H1 (cell line): ENCODE measurements at regions of chr14 and their contacts with region 1.

Region 1: GRCh38 chr14:23141671-23142451 is 22.8 kb upstream of the CEBPE start:
- DNase-seq: no peak
- H3K4me3 ChIP-seq: no peak overlapping the region
- H3K27ac ChIP-seq: no peak overlapping the region
- H3K4me1 ChIP-seq: no peaks in the 10 kb centered on the region
- H3K27me3 ChIP-seq: no peaks in the 10 kb centered on the region
- CTCF ChIP-seq: no peak
- EP300 ChIP-seq: no peak
- POLR2A ChIP-seq: no peak
- RAD21 ChIP-seq: no peak

Region 2: DNA sequence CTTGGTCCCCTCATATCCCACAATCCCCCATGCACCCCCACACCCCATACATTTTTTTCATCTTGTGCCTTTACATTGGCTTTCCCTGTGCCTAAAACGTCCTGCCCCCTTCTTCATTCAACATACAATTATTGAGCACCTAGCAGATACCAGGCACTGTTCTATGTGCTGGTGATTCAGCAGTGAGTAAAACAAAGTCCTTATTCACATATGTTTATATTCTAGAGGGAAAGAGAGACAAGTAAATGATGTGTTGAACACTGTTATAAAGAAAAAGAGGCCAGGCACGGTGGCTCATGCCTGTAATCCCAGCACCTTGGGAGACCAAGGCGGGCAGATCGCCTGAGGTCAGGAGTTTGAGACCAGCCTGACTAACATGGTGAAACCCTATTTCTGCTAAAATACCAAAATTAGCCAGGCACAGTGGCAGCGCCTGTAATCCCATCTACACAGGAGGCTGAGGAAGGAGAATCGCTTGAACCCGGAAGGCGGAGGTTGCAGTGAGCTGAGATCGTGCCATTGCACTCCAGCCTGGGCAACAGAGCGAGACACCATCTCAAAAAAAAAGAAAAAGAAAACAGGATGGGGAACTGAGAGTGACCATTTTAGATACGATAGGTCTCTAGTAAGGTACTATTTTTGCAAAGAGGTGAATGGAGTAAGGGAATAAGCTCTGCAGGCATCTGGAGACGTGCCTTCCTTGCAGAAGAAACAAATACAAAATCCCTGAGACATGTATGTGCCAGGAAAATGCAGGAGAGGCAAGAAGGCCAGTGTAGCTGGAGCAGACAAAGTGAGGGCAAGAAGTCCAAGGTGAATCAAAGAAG is 338.8 kb before region 1 on chr14:
- CTCF ChIA-PET with region 1: no interaction called
- POLR2A ChIA-PET with region 1: no interaction called
- DNase-seq: no peak
- H3K4me3 ChIP-seq: no peak overlapping the region
- H3K27ac ChIP-seq: no peak overlapping the region
- H3K4me1 ChIP-seq: 0 out of 7 replicates have a peak, but pooled peaks cover 0 to 2% (median 0%) of the 10 kb centered on the region in 4 experiments
- H3K27me3 ChIP-seq: no peaks in the 10 kb centered on the region
- CTCF ChIP-seq: no peak
- EP300 ChIP-seq: no peak
- POLR2A ChIP-seq: no peak
- RAD21 ChIP-seq: no peak

Region 3: GRCh38 chr14:23154964-23155587 is 13.2 kb after region 1 on chr14:
- CTCF ChIA-PET with region 1: interaction called, 5 read pairs
- POLR2A ChIA-PET with region 1: interaction called, 10 read pairs
- DNase-seq: peak in 1 of 2 experiments; percentile 48
- H3K4me3 ChIP-seq: no peak overlapping the region
- H3K27ac ChIP-seq: 0 out of 2 replicates have a peak overlapping the region, but pooled peaks have one; percentile 8
- H3K4me1 ChIP-seq: peaks cover 11 to 22% (median 15%) of the 10 kb centered on the region in 4 experiments
- H3K27me3 ChIP-seq: no peaks in the 10 kb centered on the region
- CTCF ChIP-seq: no peak
- EP300 ChIP-seq: no peak
- POLR2A ChIP-seq: no peak
- RAD21 ChIP-seq: no peak

Region 4: GRCh38 chr14:23245282-23245681 is 103.4 kb after region 1 on chr14:
- CTCF ChIA-PET with region 1: no interaction called
- POLR2A ChIA-PET with region 1: no interaction called
- DNase-seq: no peak
- H3K4me3 ChIP-seq: no peak overlapping the region
- H3K27ac ChIP-seq: no peak overlapping the region
- H3K4me1 ChIP-seq: peaks cover 0 to 4% (median 2%) of the 10 kb centered on the region in 4 experiments; a peak in 3 of 7 replicates
- H3K27me3 ChIP-seq: no peaks in the 10 kb centered on the region
- CTCF ChIP-seq: no peak
- EP300 ChIP-seq: no peak
- POLR2A ChIP-seq: no peak
- RAD21 ChIP-seq: no peak